ENCODE measurements at regions of chr10 and their contacts with region 1.

Region 1: GRCh38 chr10:67837541-67838314 is at the start of gene DNAJC12:
- DNase-seq: peak; percentile 70 to 83 (median 76)
- ATAC-seq: peak; percentile 96
- H3K4me3 ChIP-seq: peak within 1 kb of the TSS; percentile 39
- H3K27ac ChIP-seq: peak within 1 kb of the TSS; percentile 54; the same call in 2 of the 3 replicates
- H3K4me1 ChIP-seq: no peaks in the 10 kb centered on the region; a peak in 1 of 5 replicates
- H3K27me3 ChIP-seq: no peaks in the 10 kb centered on the region
- CTCF ChIP-seq: peak in 2 of 3 experiments; percentile 3 to 25; a peak in 2 of 6 replicates
- EP300 ChIP-seq: no peak
- POLR2A ChIP-seq: peak; percentile 84
- RAD21 ChIP-seq: peak in 1 of 2 experiments; percentile 53; a peak in 2 of 4 replicates
- polyA plus RNA-seq, gene DNAJC12: 92.2 to 95.9 TPM

Region 2: GRCh38 chr10:67788025-67788886 is 49.5 kb before region 1 on chr10:
- CTCF ChIA-PET with region 1: no interaction called
- POLR2A ChIA-PET with region 1: interaction called, 3 read pairs
- in situ Hi-C with region 1: no loop called
- intact Hi-C with region 1: loop called (anchors 2 kb)
- DNase-seq: peak; percentile 84 to 90 (median 88)
- ATAC-seq: peak; percentile 89
- H3K4me3 ChIP-seq: no peak overlapping the region
- H3K27ac ChIP-seq: no peak overlapping the region
- H3K4me1 ChIP-seq: peaks cover 0 to 14% of the 10 kb centered on the region in 2 experiments; a peak in 4 of 5 replicates
- H3K27me3 ChIP-seq: no peaks in the 10 kb centered on the region
- CTCF ChIP-seq: peak; percentile 87 to 95 (median 94)
- EP300 ChIP-seq: no peak
- POLR2A ChIP-seq: no peak
- RAD21 ChIP-seq: peak; percentile 95 to 98